ENCODE measurements at regions of chr6 and their contacts with region 1.

Region 1: GRCh38 chr6:37432916-37433656 is at the start of gene CMTR1:
- DNase-seq: peak; percentile 100
- H3K4me3 Mint-ChIP-seq: peak within 1 kb of the TSS; percentile 96
- H3K27ac Mint-ChIP-seq: peak within 1 kb of the TSS; percentile 99
- H3K4me1 Mint-ChIP-seq: peaks cover 34% of the 10 kb centered on the region
- H3K27me3 Mint-ChIP-seq: peaks cover 8% of the 10 kb centered on the region
- total RNA-seq, gene CMTR1: 56.4 and 57.1 TPM in 2 replicates

Region 2: DNA sequence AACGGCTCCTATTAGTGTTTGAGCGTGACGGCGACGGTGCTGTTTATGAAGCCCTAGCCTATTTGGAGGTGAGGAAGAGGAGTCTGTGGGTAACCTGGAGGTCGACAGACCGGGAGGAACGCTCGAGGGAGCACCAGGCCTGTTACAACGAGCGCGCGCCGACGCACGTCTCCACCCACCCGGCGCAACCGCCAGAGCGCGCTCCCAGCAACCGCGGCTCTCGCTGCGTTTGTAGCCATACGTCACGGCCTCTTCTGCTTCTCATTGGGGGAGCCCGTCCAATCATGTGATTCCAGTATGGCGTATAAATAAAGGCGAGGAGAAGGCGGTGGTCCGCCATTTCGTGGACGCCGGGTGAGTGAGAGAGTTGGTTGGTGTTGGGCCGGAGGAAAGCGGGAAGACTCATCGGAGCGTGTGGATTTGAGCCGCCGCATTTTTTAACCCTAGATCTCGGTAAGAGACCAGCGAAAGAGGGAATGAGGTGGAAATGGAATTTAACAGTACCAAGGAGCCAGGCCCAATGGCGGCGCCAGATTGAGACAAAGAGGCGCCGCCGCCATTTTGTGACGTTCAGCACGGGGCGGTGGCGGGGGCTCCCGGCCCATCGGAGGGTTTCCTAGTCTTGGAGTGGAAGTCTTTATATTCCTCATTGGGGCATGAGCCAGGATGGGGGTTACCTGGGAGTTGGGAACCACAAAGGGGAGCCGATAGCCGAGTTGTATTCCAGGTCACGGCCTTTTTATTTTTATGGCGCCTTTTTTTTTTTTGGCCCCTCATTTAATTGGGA is 838.9 kb before region 1 on chr6 and contains the start of gene SRSF3:
- intact Hi-C with region 1: loop called (anchors 5 kb)
- DNase-seq: peak; percentile 99
- H3K4me3 Mint-ChIP-seq: peak within 1 kb of the TSS; percentile 92
- H3K27ac Mint-ChIP-seq: peak within 1 kb of the TSS; percentile 98
- H3K4me1 Mint-ChIP-seq: peaks cover 32% of the 10 kb centered on the region
- H3K27me3 Mint-ChIP-seq: no peaks in the 10 kb centered on the region
- total RNA-seq, gene SRSF3: 532 and 572 TPM in 2 replicates

Region 3: DNA sequence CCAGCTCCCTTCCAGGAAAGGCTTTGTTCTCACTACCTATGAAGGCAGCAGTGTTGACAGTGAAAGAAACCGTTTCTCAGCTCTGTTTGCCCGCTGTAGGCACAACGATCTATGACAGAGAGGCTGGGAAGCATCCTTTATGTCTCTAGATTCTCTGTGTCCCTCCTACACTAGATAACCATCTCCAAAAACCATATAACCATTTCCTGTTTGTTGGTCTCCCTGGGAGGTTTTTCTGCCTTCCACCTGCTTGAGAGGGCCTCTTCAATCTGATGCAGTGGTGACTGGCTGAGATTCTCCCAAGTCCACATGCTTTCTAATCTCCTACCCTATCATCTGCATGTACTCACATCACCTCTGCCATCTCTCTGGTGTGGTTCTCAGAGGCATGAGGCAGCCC is 143.2 kb before region 1 on chr6:
- intact Hi-C with region 1: no loop called
- DNase-seq: peak; percentile 90
- H3K4me3 Mint-ChIP-seq: peak overlapping the region; percentile 61
- H3K27ac Mint-ChIP-seq: peak overlapping the region; percentile 93
- H3K4me1 Mint-ChIP-seq: peaks cover 45% of the 10 kb centered on the region
- H3K27me3 Mint-ChIP-seq: no peaks in the 10 kb centered on the region

Region 4: DNA sequence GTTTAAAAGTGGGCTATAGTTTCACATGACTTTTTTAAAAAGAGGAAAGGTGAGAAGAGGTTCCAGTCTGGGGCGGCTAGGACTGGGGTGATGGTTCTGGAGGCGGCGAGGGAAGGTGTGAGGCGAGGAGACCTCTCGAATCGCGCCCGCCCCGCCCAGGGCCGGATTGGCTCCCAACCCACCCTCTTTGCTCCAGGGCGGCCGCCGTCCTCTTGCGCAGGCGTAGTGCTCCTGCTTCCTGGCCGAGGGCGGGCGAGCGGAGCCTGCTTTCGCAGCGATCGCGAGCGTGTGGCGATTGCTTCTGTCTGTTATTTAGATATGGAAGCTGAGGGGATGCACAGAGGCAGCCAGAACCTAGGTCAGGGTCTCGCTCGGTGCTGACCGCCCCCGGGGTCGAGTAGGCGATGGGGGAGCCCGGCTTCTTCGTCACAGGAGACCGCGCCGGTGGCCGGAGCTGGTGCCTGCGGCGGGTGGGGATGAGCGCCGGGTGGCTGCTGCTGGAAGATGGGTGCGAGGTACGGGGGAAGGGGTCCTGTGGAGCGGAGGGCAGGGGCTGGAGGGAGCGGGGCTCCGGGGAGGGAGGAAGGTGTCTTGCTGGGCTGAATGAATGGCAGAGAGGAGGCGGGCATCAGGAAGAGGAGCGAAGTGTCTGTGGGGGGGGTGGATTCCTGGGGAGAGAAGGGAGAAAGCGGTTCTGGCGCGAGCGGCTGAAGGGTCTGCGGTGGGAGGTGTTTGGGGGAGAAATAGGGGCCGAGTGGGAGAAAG is 79.1 kb before region 1 on chr6 and contains the start of gene RNF8:
- intact Hi-C with region 1: loop called (anchors 2 kb)
- DNase-seq: peak; percentile 98
- H3K4me3 Mint-ChIP-seq: peak within 1 kb of the TSS; percentile 97
- H3K27ac Mint-ChIP-seq: peak within 1 kb of the TSS; percentile 92
- H3K4me1 Mint-ChIP-seq: peaks cover 22% of the 10 kb centered on the region
- H3K27me3 Mint-ChIP-seq: no peaks in the 10 kb centered on the region
- total RNA-seq, gene RNF8: 29.4 and 32.0 TPM in 2 replicates

Region 5: DNA sequence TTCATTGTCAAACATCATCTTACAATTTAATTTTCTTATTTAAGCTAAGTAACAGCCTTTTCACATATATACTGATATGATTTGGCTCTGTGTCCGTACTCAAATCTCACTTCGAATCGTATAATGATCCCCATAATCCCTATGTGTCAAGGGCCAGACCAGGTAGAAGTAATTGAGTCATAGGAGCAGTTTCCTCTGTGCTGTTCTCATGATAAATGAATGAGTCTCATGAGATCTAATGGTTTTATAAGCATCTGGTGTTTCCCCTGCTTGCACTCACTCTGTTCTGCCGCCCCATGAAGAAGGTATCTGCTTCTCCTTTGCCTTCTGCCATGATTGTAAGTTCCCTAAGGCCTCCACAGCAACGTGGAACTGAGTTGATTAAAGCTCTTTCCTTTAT is 25.1 kb before region 1 on chr6:
- intact Hi-C with region 1: no loop called
- DNase-seq: no peak
- H3K4me3 Mint-ChIP-seq: no peak overlapping the region
- H3K27ac Mint-ChIP-seq: no peak overlapping the region
- H3K4me1 Mint-ChIP-seq: no peaks in the 10 kb centered on the region
- H3K27me3 Mint-ChIP-seq: peaks cover 51% of the 10 kb centered on the region

Region 6: GRCh38 chr6:37451441-37452193 is 18.5 kb after region 1 on chr6:
- intact Hi-C with region 1: no loop called
- DNase-seq: no peak
- H3K4me3 Mint-ChIP-seq: peak overlapping the region; percentile 18
- H3K27ac Mint-ChIP-seq: peak overlapping the region; percentile 72
- H3K4me1 Mint-ChIP-seq: peaks cover 22% of the 10 kb centered on the region
- H3K27me3 Mint-ChIP-seq: no peaks in the 10 kb centered on the region

Region 7: DNA sequence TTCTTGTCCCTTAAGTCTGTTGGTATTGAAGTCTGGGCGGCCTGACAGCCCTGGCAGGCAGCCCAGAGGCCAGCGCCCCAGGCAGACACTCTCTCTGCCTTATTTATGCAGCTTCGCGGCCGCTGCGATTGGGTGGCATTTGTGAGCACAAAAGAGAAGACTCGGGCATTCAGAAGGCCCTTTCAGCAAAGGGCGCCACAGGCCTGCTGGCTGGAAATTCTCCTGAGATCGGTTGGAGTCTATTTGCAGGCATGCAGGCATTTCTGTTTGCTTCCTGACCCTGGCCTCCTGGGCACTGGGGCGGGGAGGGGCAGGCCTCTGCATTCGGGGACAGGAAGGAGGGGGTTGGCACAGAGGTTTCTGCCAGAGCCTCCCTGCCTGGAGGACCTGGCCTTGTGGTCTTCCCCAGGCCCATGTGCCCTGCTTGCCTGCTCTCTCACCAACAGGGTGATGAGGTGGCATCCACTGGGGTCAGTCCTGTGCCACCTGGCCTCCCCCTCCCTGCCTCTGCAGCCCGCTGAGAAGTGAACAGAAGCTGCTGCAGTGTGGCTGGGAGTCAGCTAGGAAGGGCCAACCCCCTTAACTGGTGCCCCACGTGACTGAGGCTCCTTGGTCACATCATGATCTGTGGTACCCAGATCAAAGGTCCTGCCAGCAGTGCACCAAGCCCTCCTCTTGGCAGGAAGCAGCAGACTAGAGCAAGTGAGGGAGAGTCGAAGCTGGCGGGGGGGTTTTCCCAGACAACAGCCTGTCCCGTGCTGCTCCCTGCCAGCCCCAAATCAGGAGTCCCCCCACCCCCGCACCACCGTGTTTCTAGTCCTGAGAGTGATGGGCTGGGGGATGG is 83.2 kb after region 1 on chr6:
- intact Hi-C with region 1: loop called (anchors 5 kb)
- DNase-seq: peak; percentile 94
- H3K4me3 Mint-ChIP-seq: peak overlapping the region; percentile 76
- H3K27ac Mint-ChIP-seq: peak overlapping the region; percentile 97
- H3K4me1 Mint-ChIP-seq: peaks cover 58% of the 10 kb centered on the region
- H3K27me3 Mint-ChIP-seq: no peaks in the 10 kb centered on the region

Region 8: DNA sequence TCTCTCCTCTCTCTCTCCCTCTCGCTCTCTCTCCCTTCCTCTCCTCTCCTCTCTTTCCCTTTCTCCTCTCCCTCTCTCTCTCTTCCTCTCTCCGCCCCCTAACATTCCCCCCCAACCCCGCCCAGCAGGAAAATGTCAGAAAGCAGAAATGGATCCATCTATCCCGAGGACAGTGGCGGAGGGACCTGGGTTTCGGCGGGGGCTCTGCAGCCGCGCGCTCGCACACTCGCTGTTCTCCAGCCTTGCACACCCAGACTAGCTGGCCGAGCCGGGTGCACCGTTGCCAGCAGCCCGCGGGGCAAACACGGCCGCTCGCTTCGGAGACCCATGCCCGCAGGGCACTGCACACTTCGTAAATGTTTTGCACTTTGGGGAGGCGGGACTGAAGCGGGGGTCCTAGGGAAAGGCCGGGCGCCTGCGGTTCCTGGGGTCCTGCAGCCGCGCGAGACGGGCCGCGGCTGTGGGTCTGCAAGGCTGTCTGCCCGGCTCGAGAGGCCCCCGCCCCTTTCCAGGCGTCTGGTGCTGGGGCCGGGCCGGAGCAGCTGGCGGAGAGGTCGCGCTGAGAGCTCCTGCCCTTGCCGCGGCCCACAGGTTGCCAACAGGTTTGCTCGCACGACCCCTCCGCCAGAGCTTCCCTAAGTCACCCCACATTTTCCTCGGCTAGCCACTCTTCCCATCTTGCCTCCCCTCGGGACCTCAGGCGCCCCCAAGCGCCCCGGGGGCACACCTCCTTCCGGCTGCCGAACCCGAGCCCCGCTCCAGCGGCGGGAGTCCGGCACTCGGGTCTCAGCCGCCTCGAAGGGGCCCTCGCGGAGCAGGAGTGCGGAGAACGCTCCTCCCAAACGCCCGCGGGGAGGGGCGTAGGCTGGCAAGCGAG is 265.4 kb after region 1 on chr6:
- intact Hi-C with region 1: loop called (anchors 5 kb)
- DNase-seq: peak; percentile 90
- H3K4me3 Mint-ChIP-seq: peak overlapping the region; percentile 97
- H3K27ac Mint-ChIP-seq: peak overlapping the region; percentile 93
- H3K4me1 Mint-ChIP-seq: peaks cover 26% of the 10 kb centered on the region
- H3K27me3 Mint-ChIP-seq: peaks cover 59% of the 10 kb centered on the region

Measured in activated CD4-positive, alpha-beta T cell treated with anti-CD3 and anti-CD28 coated beads, Interleukin-2, amount 10 ng/mL, durations not matched to agents 24 days and 14 days (primary cell).